Cardiac septum (tissue), 1 donor: ENCODE measurements at regions of chr9 and their contacts with region 1.

Region 1: DNA sequence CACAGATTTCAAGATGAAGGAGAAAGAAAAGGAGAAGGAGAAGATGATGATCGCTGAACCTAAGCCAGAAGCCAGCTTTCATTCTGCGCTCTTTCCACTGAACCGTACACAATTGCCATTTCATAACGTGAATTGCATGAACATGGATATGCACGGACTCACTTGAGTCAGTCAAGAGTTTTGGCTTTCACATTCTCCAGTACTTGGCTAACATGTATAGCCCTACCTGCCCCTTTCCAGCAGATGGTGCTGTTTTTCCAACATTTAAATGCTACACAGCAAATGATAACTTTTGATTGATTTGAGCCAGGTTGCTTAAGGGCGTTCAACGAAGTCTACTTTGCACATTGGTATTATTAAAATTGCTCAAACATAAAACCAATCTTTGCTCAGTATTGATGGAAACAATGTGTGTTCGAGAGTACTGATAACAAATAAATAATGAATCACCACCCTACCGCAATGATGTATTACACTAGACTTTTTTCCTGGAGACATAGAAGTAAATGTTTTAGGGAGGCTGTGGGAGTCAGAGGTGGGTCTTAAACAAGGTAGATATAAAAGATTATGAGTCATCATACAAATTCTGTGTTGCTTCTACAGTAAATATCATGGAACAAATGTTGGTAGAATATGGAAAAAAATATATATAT is 196.4 kb downstream of the TRPM3 start:
- DNase-seq: no peak

Region 2: DNA sequence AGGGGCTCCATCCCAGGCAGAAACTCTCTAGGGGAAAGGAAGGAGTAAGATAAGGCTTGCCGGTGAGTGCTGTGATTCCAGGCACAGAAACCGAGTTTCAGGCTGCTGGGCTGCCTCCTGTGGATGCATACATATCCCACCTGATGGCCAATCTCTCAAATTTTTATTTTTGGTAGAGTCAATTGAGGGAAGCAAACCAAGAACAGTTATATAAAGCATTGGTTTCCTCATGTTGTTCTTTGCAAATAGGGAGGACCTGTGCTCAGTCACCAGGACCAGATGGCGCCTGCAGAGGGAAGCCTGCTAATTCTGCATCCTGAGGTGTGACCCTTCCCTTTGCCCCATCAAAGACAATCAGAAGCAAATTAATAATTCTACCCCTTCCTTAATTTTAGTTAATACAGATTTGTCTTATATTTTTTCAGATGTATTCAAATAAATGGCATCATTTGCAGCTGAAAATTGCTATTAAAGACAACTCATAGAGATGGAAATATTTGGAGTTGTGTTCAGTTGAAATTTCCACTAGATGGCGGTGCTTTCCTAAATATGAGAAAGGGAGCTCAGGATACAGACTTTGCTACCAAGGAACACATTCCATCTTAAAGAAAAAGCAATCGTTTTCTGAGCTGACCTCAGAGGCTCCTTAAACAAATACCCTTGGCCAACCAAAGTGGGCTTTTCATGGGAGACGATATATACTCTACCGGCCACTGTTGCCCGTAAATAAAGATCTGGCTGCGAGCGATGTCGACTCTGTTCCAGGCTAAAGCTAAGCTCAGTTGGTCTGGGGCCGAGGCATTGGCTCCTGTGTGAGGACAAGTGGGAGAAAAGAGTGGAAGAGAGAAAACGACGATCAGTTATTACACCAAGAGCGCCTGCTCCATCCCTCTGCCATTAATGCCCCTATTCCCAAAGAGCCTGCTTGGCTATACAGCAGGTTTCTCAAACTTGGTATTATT is 284.9 kb before region 1 on chr9:
- intact Hi-C with region 1: loop called (anchors 10 kb)
- DNase-seq: no peak

Region 3: DNA sequence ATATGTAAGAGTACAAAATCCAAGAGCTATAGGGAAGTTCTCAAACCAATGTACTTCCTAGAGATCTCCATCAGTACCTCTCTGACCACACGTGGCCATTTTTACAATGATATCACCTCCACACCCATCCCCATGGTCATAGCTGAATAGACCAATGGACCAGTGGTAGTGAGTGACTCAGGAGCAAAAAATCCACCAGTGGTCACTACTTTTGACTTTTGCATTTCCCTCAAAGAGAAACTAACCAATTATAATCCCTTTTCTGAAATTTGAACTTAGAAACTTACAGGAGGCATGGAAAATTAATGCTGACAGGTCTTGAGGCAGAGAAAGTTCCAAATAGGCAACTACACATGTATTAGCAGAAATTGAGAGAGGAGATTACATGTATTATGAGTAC is 42.0 kb before region 1 on chr9:
- intact Hi-C with region 1: no loop called
- DNase-seq: no peak

Region 4: GRCh38 chr9:71001780-71002386 is 76.9 kb after region 1 on chr9:
- intact Hi-C with region 1: loop called (anchors 10 kb)
- DNase-seq: no peak

Region 5: GRCh38 chr9:71249729-71250317 is 324.8 kb after region 1 on chr9:
- intact Hi-C with region 1: loop called (anchors 5 kb)
- DNase-seq: no peak